ENCODE measurements at regions of chr10 and their contacts with region 1.

Region 1: DNA sequence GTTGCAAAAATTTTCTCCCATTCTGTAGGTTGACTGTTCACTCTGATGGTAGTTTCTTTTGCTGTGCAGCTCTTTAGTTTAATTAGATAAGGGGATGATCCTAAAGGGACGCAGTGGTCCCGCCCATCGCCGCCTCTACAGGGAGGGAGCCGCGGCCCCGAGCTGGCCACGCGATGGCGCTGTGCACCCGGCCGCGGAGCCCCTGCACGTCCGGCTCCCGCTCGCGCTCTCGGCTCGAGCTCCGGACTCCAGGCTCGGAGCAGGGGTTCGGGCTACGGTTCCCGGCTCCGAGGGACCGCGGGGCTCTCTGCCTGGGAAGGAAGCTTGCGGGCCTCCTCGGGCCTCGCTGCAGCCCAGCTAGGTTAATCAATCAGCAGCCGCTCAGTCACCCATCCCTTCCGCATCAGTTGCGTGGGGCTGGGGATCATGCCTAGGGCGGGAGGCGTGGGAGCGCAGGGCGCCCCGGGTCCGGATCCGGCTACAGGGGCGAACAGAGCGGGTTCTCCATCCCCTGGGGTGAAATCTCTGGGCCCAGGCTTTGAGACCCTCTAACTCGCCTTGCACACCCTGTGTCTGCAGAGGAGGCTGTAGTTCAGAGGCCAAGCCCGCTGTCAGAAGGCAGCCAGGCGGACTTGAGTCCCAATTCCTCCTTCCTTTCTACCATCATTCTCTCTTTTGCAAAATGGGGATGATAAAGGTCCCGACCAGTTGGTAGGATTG is 97.9 kb downstream of the WDR11 start:
- DNase-seq: peak; percentile 1 to 34 (median 19)
- H3K4me3 ChIP-seq: peak overlapping the region in 1 of 3 experiments; percentile 43
- H3K4me3 Mint-ChIP-seq: peak overlapping the region in 1 of 2 donors; percentile 69
- H3K27ac ChIP-seq: no peak overlapping the region
- H3K27ac Mint-ChIP-seq: no peak overlapping the region
- H3K4me1 ChIP-seq: peaks cover 5 to 7% of the 10 kb centered on the region in 2 donors
- H3K4me1 Mint-ChIP-seq: peaks cover 4% of the 10 kb centered on the region
- H3K27me3 ChIP-seq: peaks cover 44 to 56% of the 10 kb centered on the region in 2 donors
- H3K27me3 Mint-ChIP-seq: peaks cover 51 to 80% (median 61%) of the 10 kb centered on the region in 3 donors
- CTCF ChIP-seq: peak; percentile 76

Region 2: GRCh38 chr10:120436431-120437112 is 512.5 kb before region 1 on chr10:
- intact Hi-C with region 1: no loop called
- DNase-seq: no peak
- H3K4me3 ChIP-seq: no peak overlapping the region
- H3K4me3 Mint-ChIP-seq: no peak overlapping the region
- H3K27ac ChIP-seq: no peak overlapping the region
- H3K27ac Mint-ChIP-seq: no peak overlapping the region
- H3K4me1 ChIP-seq: no peaks in the 10 kb centered on the region
- H3K4me1 Mint-ChIP-seq: no peaks in the 10 kb centered on the region
- H3K27me3 ChIP-seq: peaks cover 0 to 4% of the 10 kb centered on the region in 2 donors
- H3K27me3 Mint-ChIP-seq: peaks cover 1 to 7% (median 4%) of the 10 kb centered on the region in 3 donors
- CTCF ChIP-seq: no peak

Region 3: GRCh38 chr10:121112579-121113386 is 163.7 kb after region 1 on chr10:
- intact Hi-C with region 1: no loop called
- DNase-seq: no peak
- H3K4me3 ChIP-seq: no peak overlapping the region
- H3K4me3 Mint-ChIP-seq: no peak overlapping the region
- H3K27ac ChIP-seq: no peak overlapping the region
- H3K27ac Mint-ChIP-seq: no peak overlapping the region
- H3K4me1 ChIP-seq: no peaks in the 10 kb centered on the region
- H3K4me1 Mint-ChIP-seq: no peaks in the 10 kb centered on the region
- H3K27me3 ChIP-seq: peaks cover 0 to 11% of the 10 kb centered on the region in 2 donors
- H3K27me3 Mint-ChIP-seq: peaks cover 0 to 7% (median 2%) of the 10 kb centered on the region in 3 donors
- CTCF ChIP-seq: no peak

Region 4: GRCh38 chr10:121880895-121881294 is 931.8 kb after region 1 on chr10:
- intact Hi-C with region 1: loop called in 1 of 2 experiments (anchors 5 kb)
- DNase-seq: no peak
- H3K4me3 ChIP-seq: no peak overlapping the region
- H3K4me3 Mint-ChIP-seq: no peak overlapping the region
- H3K27ac ChIP-seq: no peak overlapping the region
- H3K27ac Mint-ChIP-seq: peak overlapping the region in 1 of 7 donors; percentile 15
- H3K4me1 ChIP-seq: peaks cover 0 to 6% of the 10 kb centered on the region in 2 donors
- H3K4me1 Mint-ChIP-seq: peaks cover 9% of the 10 kb centered on the region
- H3K27me3 ChIP-seq: no peaks in the 10 kb centered on the region
- H3K27me3 Mint-ChIP-seq: peaks cover 0 to 1% (median 0%) of the 10 kb centered on the region in 3 donors
- CTCF ChIP-seq: no peak

Region 5: DNA sequence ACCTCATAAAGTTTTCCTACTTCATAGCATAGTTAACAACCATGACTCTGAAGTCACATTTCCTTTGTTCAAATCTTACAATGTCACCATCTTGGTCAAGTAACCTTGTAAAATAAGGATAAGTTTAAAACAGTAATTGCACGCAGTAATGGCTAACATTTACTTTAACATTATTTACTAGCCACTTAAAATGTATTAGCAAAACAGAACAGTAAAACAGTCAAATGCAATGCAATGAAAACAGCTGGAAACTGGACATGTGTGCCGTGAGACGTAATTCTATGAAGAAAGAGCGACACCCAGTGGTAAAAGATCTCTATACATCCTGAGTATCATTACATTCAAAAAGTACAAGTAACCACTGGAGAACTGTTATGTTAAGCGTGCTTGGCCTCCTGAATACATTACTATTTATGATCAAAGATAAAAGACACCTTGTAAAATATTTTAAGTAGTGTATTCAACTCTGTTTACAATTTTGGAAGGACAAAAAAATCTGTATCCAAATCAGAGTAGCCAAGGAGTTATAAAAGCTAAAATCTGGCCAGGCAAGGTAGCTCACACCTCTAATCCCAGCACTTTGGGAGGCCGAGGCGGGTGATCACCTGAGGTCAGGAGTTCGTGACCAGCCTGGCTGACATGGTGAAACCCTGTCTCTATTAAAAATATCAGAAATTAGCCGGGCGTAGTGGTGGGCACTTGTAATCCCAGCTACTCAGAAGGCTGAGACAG is 951.6 kb after region 1 on chr10:
- intact Hi-C with region 1: loop called (anchors 5 kb)
- DNase-seq: peak; percentile 11 to 42 (median 21)
- H3K4me3 ChIP-seq: no peak overlapping the region
- H3K4me3 Mint-ChIP-seq: no peak overlapping the region
- H3K27ac ChIP-seq: no peak overlapping the region
- H3K27ac Mint-ChIP-seq: no peak overlapping the region
- H3K4me1 ChIP-seq: no peaks in the 10 kb centered on the region
- H3K4me1 Mint-ChIP-seq: no peaks in the 10 kb centered on the region
- H3K27me3 ChIP-seq: no peaks in the 10 kb centered on the region
- H3K27me3 Mint-ChIP-seq: no peaks in the 10 kb centered on the region
- CTCF ChIP-seq: peak; percentile 88

Measured in CD14-positive monocyte (primary cell).